Panc1 (cell line): ENCODE measurements at regions of chr14 and their contacts with region 1.

Region 1: DNA sequence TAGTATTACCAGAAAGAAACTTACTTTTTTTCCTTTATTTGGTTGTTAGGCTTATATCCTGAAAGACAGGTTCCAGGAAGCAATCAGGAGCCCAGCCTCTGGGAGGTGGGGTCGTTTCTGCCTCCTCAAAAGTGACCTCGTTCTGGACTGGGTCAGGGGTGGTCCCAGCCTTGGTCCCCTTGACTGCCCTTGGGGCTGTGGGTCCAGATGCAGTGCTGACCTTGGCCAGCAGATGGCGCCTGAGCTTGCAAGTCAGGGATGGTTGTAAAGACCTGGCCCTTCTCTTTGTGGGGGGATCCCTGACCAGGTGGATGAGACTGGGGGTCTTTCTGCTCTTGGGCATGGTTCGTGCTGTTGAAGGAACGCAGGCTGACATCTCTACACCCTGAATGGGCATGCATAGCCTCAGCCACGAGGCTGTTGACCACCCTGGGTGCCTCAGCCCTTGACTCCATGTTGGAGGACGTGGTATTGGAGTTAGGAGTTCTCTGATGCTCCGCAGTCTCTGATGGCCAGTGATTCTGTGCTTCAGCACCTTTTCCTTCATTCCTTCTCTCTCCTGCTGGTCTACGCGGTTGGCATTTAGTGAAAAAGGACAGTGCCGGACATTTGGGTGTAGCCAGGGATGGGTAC is 62.4 kb downstream of the ADCK1 start:
- DNase-seq: peak; percentile 43
- ATAC-seq: peak; percentile 87
- H3K4me3 ChIP-seq: no peak overlapping the region
- H3K27ac ChIP-seq: no peak overlapping the region
- H3K4me1 ChIP-seq: no peaks in the 10 kb centered on the region
- H3K27me3 ChIP-seq: no peaks in the 10 kb centered on the region
- CTCF ChIP-seq: peak; percentile 92

Region 2: DNA sequence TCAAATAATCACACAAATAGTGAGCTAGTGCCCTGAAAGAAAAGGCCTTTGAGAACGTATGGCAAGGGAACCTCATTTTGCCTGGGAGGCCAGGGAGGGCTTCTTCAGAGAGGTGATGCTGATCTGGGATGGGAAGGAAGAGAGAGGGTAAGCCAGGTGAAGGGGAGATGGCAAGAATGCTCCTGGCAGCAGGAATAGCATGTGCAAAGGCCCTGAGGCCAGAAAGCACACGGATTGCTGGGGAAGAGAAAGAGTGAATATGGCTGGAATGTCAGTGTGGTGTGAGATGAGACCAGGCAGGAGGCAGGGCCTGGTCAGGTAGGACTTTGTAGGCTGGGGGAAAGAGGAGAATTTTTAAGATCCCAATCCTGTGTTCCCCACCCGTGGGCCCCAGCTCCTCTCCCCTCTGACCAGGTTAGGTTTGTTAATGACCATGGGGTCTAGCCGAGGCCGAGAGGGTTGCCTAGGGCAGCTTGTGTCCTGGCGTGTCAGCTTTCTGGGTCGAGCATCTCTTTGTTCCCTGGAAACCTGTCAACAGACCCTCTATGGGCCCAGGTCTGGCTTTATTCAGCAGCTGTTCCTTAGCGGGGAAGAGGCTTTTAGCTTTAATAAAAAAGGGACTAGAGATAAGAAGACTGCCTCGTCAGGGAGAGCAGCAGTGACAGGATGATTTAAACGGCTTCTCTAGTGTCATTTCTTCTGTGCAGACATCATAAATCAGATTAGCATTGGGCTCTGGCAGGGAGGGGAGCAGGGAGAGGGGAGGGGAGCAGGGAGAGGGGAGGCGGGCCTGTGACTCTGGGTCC is 61.1 kb after region 1 on chr14:
- CTCF ChIA-PET with region 1: no interaction called
- POLR2A ChIA-PET with region 1: no interaction called
- in situ Hi-C with region 1: no loop called
- intact Hi-C with region 1: no loop called
- DNase-seq: no peak
- ATAC-seq: no peak
- H3K4me3 ChIP-seq: no peak overlapping the region
- H3K27ac ChIP-seq: no peak overlapping the region
- H3K4me1 ChIP-seq: no peaks in the 10 kb centered on the region
- H3K27me3 ChIP-seq: no peaks in the 10 kb centered on the region
- CTCF ChIP-seq: no peak

Region 3: GRCh38 chr14:77980475-77981321 is 118.4 kb after region 1 on chr14:
- CTCF ChIA-PET with region 1: no interaction called
- POLR2A ChIA-PET with region 1: no interaction called
- in situ Hi-C with region 1: no loop called
- intact Hi-C with region 1: loop called (anchors 10 kb)
- DNase-seq: no peak
- ATAC-seq: peak; percentile 71
- H3K4me3 ChIP-seq: peak overlapping the region; percentile 36 to 50
- H3K27ac ChIP-seq: no peak overlapping the region
- H3K4me1 ChIP-seq: no peaks in the 10 kb centered on the region; the same call in 1 of the 2 replicates
- H3K27me3 ChIP-seq: no peaks in the 10 kb centered on the region; the same call in 1 of the 2 replicates
- CTCF ChIP-seq: no peak